GM10248 (cell line): ENCODE measurements at regions of chr10 and their contacts with region 1.

Region 1: GRCh38 chr10:100518761-100519241 is 860 bp downstream of the SEC31B start:
- DNase-seq: peak; percentile 57
- CTCF ChIP-seq: peak; percentile 69

Region 2: DNA sequence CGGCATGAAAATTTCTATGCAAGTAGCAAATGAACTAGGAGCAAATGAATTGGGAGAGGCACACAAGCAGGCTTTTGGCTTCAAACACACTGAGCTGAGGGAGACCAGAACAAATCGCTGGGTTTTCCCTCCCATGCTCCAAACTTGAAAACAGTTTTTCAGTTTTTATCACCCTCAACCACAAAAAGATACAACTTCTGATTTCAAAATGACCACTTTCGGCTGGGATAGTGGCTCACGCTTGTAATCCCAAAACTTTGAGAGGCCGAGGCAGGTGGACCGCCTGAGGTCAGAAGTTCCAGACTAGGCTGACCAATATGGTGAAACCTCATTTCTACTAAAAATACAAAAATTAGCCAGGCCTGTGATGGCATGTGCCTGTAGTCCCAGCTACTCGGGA is 280.4 kb before region 1 on chr10:
- CTCF ChIA-PET with region 1: no interaction called
- POLR2A ChIA-PET with region 1: no interaction called
- DNase-seq: peak; percentile 43
- CTCF ChIP-seq: no peak

Region 3: DNA sequence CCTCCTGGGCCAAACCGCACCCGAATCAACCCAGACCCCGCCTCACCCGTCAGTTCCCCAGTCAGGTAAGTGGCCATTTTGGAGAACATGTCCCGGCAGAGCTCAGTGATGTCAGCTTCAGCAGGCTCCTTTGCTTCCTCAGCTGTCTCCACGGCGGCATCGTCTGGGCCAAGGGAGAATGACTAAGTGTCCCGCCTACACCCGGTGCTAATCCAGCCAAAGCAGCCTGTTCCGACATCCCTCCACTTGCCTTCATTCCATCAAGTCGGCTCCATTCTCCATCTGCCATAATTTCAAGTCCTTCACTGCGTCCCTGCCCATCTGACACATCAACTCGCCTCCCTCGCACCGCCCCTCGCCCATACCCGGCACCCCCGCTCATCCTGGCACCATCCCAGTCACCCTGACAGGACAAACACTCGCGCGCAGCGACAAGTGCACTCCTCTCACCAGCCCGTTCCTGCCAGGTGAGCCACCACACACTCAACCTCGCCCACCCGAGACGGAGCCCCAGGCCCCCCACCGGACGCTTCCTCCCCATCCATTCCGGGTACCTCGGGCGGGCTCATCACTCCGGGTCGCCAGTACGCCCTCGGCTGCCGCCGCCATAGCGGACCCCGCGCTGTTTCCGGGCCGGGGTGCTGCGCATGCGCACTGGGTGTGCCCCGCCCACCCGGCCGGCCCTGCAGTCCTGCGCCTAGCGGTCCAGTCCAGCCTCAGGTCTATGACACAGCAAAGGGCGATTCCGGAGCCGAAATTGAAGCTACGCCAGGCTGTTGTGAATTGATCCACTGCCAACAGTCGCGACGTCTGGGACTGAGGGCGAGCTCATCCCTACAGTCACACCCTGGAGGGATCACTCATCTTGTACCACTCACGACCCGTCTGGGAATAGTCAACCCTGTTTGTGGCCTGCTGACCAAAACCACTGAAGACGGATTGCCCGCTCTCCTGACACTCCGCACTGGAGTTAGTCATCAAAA is 232.5 kb before region 1 on chr10 and contains the start of gene BLOC1S2:
- CTCF ChIA-PET with region 1: no interaction called
- POLR2A ChIA-PET with region 1: no interaction called
- DNase-seq: peak; percentile 98
- CTCF ChIP-seq: peak; percentile 16

Region 4: GRCh38 chr10:100338434-100339036 is 180.3 kb before region 1 on chr10:
- CTCF ChIA-PET with region 1: interaction called, 13 read pairs
- POLR2A ChIA-PET with region 1: no interaction called
- DNase-seq: peak; percentile 81
- CTCF ChIP-seq: peak; percentile 89

Region 5: DNA sequence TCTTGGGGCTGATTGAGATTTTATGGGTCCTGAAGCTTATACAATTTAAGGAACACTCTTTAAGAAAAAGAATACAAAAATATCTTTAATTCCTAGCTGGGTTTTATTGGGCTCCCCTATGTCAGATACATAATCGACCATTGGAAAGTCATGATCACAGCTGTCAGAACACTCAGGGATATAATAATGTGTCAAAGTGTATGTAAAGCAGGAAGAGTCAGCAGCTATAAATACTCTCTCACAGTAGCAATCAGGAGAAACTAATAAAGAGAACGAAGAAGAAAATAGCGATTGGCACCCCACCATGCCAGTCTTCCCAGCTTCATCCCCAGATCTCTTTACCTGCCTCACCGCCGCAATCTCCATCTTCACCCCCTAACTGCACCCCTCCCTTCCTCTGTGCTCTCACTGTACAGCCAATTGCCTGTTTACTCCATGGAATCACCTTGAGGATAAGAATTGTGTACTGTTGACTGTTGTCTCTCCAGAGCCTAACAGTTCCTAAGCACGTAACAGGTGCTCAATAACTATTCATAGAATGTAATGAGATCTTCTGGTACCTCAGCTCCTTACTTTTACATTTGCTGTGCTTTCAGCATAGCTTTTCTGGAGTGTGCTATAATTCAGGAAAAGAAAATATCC is 80.0 kb before region 1 on chr10:
- CTCF ChIA-PET with region 1: interaction called, 43 read pairs
- POLR2A ChIA-PET with region 1: no interaction called
- DNase-seq: no peak
- CTCF ChIP-seq: no peak

Region 6: GRCh38 chr10:100489396-100489795 is 29.4 kb before region 1 on chr10:
- CTCF ChIA-PET with region 1: interaction called, 17 read pairs
- POLR2A ChIA-PET with region 1: no interaction called
- DNase-seq: no peak
- CTCF ChIP-seq: no peak

Region 7: DNA sequence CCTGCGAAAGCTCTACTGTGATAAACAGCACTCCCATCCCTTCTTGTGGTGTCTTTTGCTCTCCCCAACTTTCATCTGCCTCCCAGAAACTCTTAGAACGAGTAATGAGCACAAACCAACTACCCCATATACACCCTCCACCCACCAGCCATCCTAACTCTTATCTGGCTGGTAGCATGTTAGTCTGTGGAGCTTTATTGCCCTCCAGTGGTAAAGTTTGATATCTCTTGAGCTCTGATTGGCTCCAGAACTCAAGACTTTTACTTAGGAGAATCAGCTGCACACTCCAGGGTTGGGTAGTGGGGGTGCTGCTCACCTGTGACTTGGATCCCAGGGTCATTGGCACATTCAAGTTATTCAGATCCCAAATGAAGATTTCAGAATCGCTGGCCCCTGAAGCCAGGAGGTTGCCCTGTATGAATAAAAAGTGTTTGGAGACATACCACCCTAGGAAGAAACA is 10.1 kb before region 1 on chr10:
- CTCF ChIA-PET with region 1: interaction called, 54 read pairs
- POLR2A ChIA-PET with region 1: no interaction called
- DNase-seq: peak; percentile 53
- CTCF ChIP-seq: peak; percentile 34

Region 8: GRCh38 chr10:100535715-100536353 is 17.0 kb after region 1 on chr10 and contains the start of gene HIF1AN:
- CTCF ChIA-PET with region 1: interaction called, 34 read pairs
- POLR2A ChIA-PET with region 1: no interaction called
- DNase-seq: peak; percentile 97
- CTCF ChIP-seq: peak; percentile 90

Region 9: GRCh38 chr10:100890673-100891317 is 372.0 kb after region 1 on chr10:
- CTCF ChIA-PET with region 1: no interaction called
- POLR2A ChIA-PET with region 1: no interaction called
- DNase-seq: no peak
- CTCF ChIP-seq: no peak